Left cardiac atrium (tissue), 4 donors: ENCODE measurements at regions of chr10 and their contacts with region 1.

Region 1: GRCh38 chr10:104349623-104350126 is 4.0 kb upstream of the CFAP58 start:
- DNase-seq: no peak
- ATAC-seq: peak in 1 of 2 donors; percentile 46

Region 2: DNA sequence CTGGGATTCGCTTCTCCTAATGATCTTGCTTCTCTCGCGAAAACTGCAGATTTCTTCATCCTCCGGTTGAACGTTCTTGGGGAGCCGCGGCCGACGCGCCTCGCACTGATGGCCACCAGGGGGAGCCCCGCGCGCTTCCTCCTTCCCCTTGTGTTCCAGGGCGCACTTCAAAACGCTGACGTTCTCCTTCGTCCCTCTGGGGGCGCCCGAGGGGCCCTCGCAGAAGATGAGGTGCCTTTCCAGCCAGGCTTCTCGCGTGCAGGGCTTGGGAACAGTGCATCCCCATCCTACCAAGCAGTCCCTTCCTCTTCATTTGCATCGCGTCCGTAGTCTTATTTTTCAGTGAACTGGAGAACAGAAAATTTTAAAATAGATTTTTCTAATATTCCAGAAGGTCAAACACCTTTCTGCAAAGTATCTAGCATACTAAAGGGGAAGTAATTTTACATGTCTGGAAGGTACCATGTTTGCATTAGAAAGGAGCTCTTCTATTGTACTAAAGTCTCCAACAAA is 58.2 kb before region 1 on chr10:
- intact Hi-C with region 1: loop called (anchors 1 to 2 kb)
- DNase-seq: peak; percentile 93
- ATAC-seq: peak; percentile 92 to 95